ENCODE measurements at regions of chr6 and their contacts with region 1.

Region 1: DNA sequence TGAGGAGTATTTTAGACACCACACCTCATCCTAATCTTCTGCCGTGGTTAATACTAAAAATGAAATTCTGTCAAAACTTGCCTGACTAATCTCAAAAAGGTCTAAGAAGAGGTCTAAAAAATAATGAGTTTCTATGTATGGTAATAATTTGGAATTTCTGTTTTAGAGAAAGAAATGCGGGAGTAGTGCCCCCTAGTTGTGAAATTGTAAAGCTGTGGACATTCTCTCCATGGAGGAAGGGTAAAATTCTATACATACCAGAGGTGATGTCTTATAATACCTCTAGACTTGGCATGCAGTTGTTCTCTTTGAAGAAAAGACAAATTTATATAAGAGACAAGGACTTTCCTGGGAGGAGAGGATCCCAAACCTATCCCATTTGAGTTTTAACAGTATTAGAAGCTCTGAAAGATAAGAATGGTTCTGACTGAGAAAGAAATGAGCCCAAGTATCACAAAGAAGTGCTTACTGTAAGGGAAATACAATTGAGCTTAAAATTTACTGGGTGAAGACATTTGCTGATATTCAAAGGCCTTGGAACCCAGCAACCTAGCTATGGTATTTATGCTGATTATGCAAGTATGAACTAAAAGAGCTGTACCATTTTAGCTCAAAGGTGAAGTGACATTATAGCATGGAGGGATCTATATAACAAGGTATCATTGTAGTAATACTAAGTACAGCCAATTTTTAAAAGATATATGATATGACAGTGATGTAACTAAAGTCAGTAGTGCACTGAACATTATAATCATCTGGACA is 5.1 kb upstream of the EPHA7 start:
- DNase-seq: no peak
- H3K4me3 Mint-ChIP-seq: no peak overlapping the region
- H3K27ac Mint-ChIP-seq: no peak overlapping the region
- H3K4me1 Mint-ChIP-seq: no peaks in the 10 kb centered on the region
- H3K27me3 Mint-ChIP-seq: peaks cover 21% of the 10 kb centered on the region
- CTCF ChIP-seq: no peak

Region 2: DNA sequence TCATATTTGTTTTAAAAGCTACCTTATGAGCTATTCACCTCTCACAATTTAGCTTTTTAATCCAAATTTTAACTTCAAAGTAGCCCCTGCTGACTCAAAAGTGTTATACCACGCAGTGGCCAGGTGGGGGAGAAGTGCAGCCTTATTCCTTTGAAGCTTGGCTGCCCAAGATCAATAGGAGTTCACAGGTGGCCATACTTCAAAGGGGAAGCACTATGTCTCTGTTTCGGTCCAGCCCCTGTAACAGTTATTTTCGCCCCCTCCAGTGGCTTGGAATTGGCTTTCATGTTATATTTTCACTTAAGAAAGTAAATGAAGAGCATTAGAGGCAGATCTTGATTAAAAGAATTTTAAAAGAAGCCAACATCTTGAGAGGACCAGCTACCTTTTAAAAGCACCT is 613.6 kb before region 1 on chr6:
- CTCF ChIA-PET with region 1: no interaction called
- intact Hi-C with region 1: loop called (anchors 2 kb)
- DNase-seq: peak; percentile 39
- H3K4me3 Mint-ChIP-seq: no peak overlapping the region
- H3K27ac Mint-ChIP-seq: no peak overlapping the region
- H3K4me1 Mint-ChIP-seq: no peaks in the 10 kb centered on the region
- H3K27me3 Mint-ChIP-seq: no peaks in the 10 kb centered on the region
- CTCF ChIP-seq: peak; percentile 45

Measured in Calu3 (cell line).